ENCODE measurements at regions of chr3 and their contacts with region 1.

Region 1: DNA sequence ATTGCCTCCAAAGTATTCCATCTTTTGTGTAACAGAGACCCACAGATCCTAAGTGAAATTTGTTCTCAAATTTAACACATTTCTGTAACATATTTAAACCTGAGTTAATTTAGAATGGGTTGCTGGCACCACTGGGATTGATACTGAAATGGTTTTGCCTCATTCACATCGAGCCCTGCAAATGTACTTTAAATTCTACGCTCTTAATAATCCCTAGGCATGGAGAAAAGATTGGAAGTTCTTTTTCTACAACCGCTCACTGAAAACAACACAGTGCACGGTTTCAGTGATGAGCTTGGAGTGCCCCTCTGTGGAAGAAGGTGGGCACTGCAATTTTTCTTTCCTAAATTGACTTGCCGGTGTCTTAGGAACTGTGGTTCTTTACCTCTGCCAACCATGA is 109.9 kb upstream of the ATP11B start:
- DNase-seq: peak in 3 of 5 donors; percentile 30 to 36 (median 32)
- ATAC-seq: peak; percentile 85 to 92 (median 86)
- H3K4me3 ChIP-seq: peak overlapping the region in 9 of 12 donors; percentile 46 to 68 (median 58)
- H3K27ac ChIP-seq: no peak overlapping the region
- H3K4me1 ChIP-seq: peaks cover 0 to 16% (median 3%) of the 10 kb centered on the region in 12 donors
- H3K27me3 ChIP-seq: peaks cover 0 to 53% (median 22%) of the 10 kb centered on the region in 9 donors
- CTCF ChIP-seq: peak; percentile 74 to 92 (median 86)
- POLR2A ChIP-seq: no peak

Region 2: GRCh38 chr3:181210275-181210674 is 1473.2 kb before region 1 on chr3:
- intact Hi-C with region 1: loop called in 6 of 10 experiments (anchors 2 to 10 kb)
- DNase-seq: no peak
- ATAC-seq: no peak
- H3K4me3 ChIP-seq: no peak overlapping the region
- H3K27ac ChIP-seq: no peak overlapping the region
- H3K4me1 ChIP-seq: no peaks in the 10 kb centered on the region
- H3K27me3 ChIP-seq: peaks cover 0 to 28% (median 0%) of the 10 kb centered on the region in 9 donors
- CTCF ChIP-seq: peak in 10 of 12 donors; percentile 13 to 49 (median 38)
- POLR2A ChIP-seq: no peak

Region 3: DNA sequence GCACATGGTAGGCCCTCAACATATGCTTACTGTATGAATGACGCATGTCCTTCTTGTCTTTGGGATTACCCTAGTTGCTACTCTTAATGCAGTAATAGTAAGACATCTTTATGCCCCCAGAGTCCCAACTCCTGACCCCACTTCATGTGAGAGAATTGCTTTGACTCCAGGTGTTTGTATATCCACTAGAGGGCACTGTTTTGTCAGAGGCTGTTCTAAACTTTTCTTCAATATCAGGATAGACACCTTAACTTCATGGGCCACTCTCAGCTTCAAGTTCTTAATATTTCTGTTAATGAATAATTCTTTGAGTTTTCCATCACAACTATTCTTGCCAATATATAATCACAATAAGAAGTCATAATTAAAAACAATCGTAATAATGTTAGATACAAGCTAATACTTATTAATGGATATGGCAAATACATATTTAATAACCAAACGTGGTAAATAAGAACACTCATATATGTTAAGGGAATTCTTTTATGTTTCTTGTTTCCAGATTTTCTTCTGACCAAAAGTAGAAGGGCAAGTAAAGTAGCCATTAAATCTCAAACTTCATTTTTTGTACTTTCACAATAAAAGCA is 1356.7 kb before region 1 on chr3:
- intact Hi-C with region 1: loop called in 1 of 10 experiments (anchors 2 kb)
- DNase-seq: no peak
- ATAC-seq: peak in 2 of 4 donors; percentile 44 to 45
- H3K4me3 ChIP-seq: no peak overlapping the region
- H3K27ac ChIP-seq: no peak overlapping the region
- H3K4me1 ChIP-seq: no peaks in the 10 kb centered on the region
- H3K27me3 ChIP-seq: no peaks in the 10 kb centered on the region
- CTCF ChIP-seq: peak; percentile 41 to 65 (median 58)
- POLR2A ChIP-seq: no peak

Region 4: GRCh38 chr3:181709537-181710279 is 973.7 kb before region 1 on chr3:
- intact Hi-C with region 1: loop called (anchors 1 to 5 kb)
- DNase-seq: peak; percentile 43 to 69 (median 64)
- ATAC-seq: peak in 1 of 4 donors; percentile 44
- H3K4me3 ChIP-seq: peak overlapping the region in 1 of 12 donors; percentile 12
- H3K27ac ChIP-seq: no peak overlapping the region
- H3K4me1 ChIP-seq: peaks cover 0 to 34% (median 8%) of the 10 kb centered on the region in 12 donors
- H3K27me3 ChIP-seq: peaks cover 56 to 100% (median 100%) of the 10 kb centered on the region in 9 donors
- CTCF ChIP-seq: peak; percentile 68 to 88 (median 80)
- POLR2A ChIP-seq: no peak

Region 5: DNA sequence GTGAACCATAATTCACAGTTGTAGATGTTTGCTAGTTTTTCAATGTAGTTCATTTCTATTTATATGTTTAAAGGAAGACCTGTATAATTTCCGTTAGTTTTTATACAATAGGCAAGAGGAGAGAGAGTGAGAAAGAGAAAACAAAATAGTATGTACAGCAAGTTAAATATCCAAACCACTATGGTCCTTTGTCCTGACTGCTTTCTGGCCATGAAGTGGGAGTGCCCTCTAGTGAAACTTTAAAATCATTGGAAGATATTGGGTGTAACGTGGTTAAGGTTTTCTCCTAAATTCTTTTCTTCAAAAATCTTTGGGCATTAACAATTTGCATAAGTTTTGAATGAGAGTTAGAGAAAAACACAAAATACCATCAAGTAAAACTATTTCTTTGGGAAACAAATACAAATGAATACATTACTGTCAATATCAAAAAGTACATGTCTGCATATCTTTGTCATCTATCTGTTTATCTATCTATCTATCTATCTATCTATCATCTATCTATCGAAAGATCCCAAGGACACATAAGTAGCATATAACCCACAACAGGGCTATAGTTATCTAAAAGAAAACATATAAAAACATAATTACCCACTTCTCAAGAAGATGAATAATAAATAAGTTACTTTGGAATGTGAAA is 424.8 kb before region 1 on chr3:
- intact Hi-C with region 1: loop called in 2 of 10 experiments (anchors 10 kb)
- DNase-seq: no peak
- ATAC-seq: peak in 1 of 4 donors; percentile 81
- H3K4me3 ChIP-seq: no peak overlapping the region
- H3K27ac ChIP-seq: no peak overlapping the region
- H3K4me1 ChIP-seq: no peaks in the 10 kb centered on the region
- H3K27me3 ChIP-seq: peaks cover 0 to 32% (median 7%) of the 10 kb centered on the region in 9 donors
- CTCF ChIP-seq: peak in 11 of 12 donors; percentile 17 to 70 (median 54)
- POLR2A ChIP-seq: no peak